ENCODE measurements at regions of chr4 and their contacts with region 1.

Region 1: GRCh38 chr4:139453371-139454110 is 380 bp upstream of the RAB33B start:
- DNase-seq: peak; percentile 92 to 98 (median 96)
- ATAC-seq: peak; percentile 86
- H3K4me3 ChIP-seq: peak overlapping the region; percentile 90 to 91
- H3K4me3 Mint-ChIP-seq: peak overlapping the region; percentile 98
- H3K27ac ChIP-seq: peak overlapping the region; percentile 92 to 96
- H3K27ac Mint-ChIP-seq: peak overlapping the region; percentile 99
- H3K4me1 ChIP-seq: peaks cover 41% of the 10 kb centered on the region
- H3K4me1 Mint-ChIP-seq: peaks cover 65% of the 10 kb centered on the region
- H3K27me3 ChIP-seq: no peaks in the 10 kb centered on the region
- H3K27me3 Mint-ChIP-seq: no peaks in the 10 kb centered on the region
- CTCF ChIP-seq: no peak

Region 2: GRCh38 chr4:139015269-139015947 is 438.1 kb before region 1 on chr4 and contains the start of gene NOCT:
- CTCF ChIA-PET with region 1: no interaction called
- POLR2A ChIA-PET with region 1: interaction called, 7 read pairs
- intact Hi-C with region 1: loop called (anchors 2 to 5 kb)
- DNase-seq: peak; percentile 76 to 98 (median 90)
- ATAC-seq: peak; percentile 86
- H3K4me3 ChIP-seq: peak within 1 kb of the TSS; percentile 52 to 67
- H3K4me3 Mint-ChIP-seq: peak within 1 kb of the TSS; percentile 91
- H3K27ac ChIP-seq: peak within 1 kb of the TSS; percentile 75 to 92
- H3K27ac Mint-ChIP-seq: peak within 1 kb of the TSS; percentile 99
- H3K4me1 ChIP-seq: peaks cover 7% of the 10 kb centered on the region
- H3K4me1 Mint-ChIP-seq: peaks cover 30% of the 10 kb centered on the region
- H3K27me3 ChIP-seq: no peaks in the 10 kb centered on the region
- H3K27me3 Mint-ChIP-seq: no peaks in the 10 kb centered on the region
- CTCF ChIP-seq: no peak
- total RNA-seq, gene NOCT: 45.7 to 49.6 TPM

Region 3: GRCh38 chr4:139177868-139178611 is 275.5 kb before region 1 on chr4:
- CTCF ChIA-PET with region 1: no interaction called
- POLR2A ChIA-PET with region 1: no interaction called
- intact Hi-C with region 1: loop called (anchors 1 to 2 kb)
- DNase-seq: peak; percentile 73 to 94 (median 88)
- ATAC-seq: peak; percentile 73
- H3K4me3 ChIP-seq: peak overlapping the region; percentile 73 to 99
- H3K4me3 Mint-ChIP-seq: peak overlapping the region; percentile 89
- H3K27ac ChIP-seq: peak overlapping the region; percentile 54 to 67
- H3K27ac Mint-ChIP-seq: peak overlapping the region; percentile 85
- H3K4me1 ChIP-seq: peaks cover 5% of the 10 kb centered on the region
- H3K4me1 Mint-ChIP-seq: peaks cover 19% of the 10 kb centered on the region
- H3K27me3 ChIP-seq: no peaks in the 10 kb centered on the region
- H3K27me3 Mint-ChIP-seq: no peaks in the 10 kb centered on the region
- CTCF ChIP-seq: no peak

Region 4: GRCh38 chr4:139301113-139301820 is 152.3 kb before region 1 on chr4 and contains the start of gene NAA15:
- CTCF ChIA-PET with region 1: interaction called, 3 read pairs
- POLR2A ChIA-PET with region 1: interaction called, 15 read pairs
- intact Hi-C with region 1: loop called (anchors 1 to 2 kb)
- DNase-seq: peak; percentile 94 to 99 (median 97)
- ATAC-seq: peak; percentile 89
- H3K4me3 ChIP-seq: peak within 1 kb of the TSS; percentile 90 to 94
- H3K4me3 Mint-ChIP-seq: peak within 1 kb of the TSS; percentile 99
- H3K27ac ChIP-seq: peak within 1 kb of the TSS; percentile 75 to 96
- H3K27ac Mint-ChIP-seq: peak within 1 kb of the TSS; percentile 98
- H3K4me1 ChIP-seq: peaks cover 28% of the 10 kb centered on the region
- H3K4me1 Mint-ChIP-seq: peaks cover 60% of the 10 kb centered on the region
- H3K27me3 ChIP-seq: no peaks in the 10 kb centered on the region
- H3K27me3 Mint-ChIP-seq: no peaks in the 10 kb centered on the region
- CTCF ChIP-seq: no peak
- total RNA-seq, gene NAA15: 55.8 to 59.0 TPM

Region 5: GRCh38 chr4:139501927-139502899 is 48.7 kb after region 1 on chr4:
- CTCF ChIA-PET with region 1: no interaction called
- POLR2A ChIA-PET with region 1: no interaction called
- intact Hi-C with region 1: loop called in 1 of 2 experiments (anchors 5 kb)
- DNase-seq: no peak
- ATAC-seq: no peak
- H3K4me3 ChIP-seq: no peak overlapping the region
- H3K4me3 Mint-ChIP-seq: no peak overlapping the region
- H3K27ac ChIP-seq: no peak overlapping the region
- H3K27ac Mint-ChIP-seq: no peak overlapping the region
- H3K4me1 ChIP-seq: no peaks in the 10 kb centered on the region
- H3K4me1 Mint-ChIP-seq: no peaks in the 10 kb centered on the region
- H3K27me3 ChIP-seq: no peaks in the 10 kb centered on the region
- H3K27me3 Mint-ChIP-seq: peaks cover 6% of the 10 kb centered on the region
- CTCF ChIP-seq: no peak

Region 6: GRCh38 chr4:139554893-139555704 is 101.6 kb after region 1 on chr4:
- CTCF ChIA-PET with region 1: no interaction called
- POLR2A ChIA-PET with region 1: interaction called, 25 read pairs
- intact Hi-C with region 1: loop called (anchors 1 to 2 kb)
- DNase-seq: peak; percentile 43 to 89 (median 74)
- ATAC-seq: peak; percentile 75
- H3K4me3 ChIP-seq: peak overlapping the region; percentile 79 to 84
- H3K4me3 Mint-ChIP-seq: peak overlapping the region; percentile 94
- H3K27ac ChIP-seq: peak overlapping the region in 1 of 2 experiments; percentile 53
- H3K27ac Mint-ChIP-seq: peak overlapping the region; percentile 95
- H3K4me1 ChIP-seq: peaks cover 9% of the 10 kb centered on the region
- H3K4me1 Mint-ChIP-seq: peaks cover 31% of the 10 kb centered on the region
- H3K27me3 ChIP-seq: peaks cover 0 to 9% of the 10 kb centered on the region in 2 experiments
- H3K27me3 Mint-ChIP-seq: peaks cover 9% of the 10 kb centered on the region
- CTCF ChIP-seq: no peak

Region 7: GRCh38 chr4:140523857-140524742 is 1070.6 kb after region 1 on chr4 and contains the start of gene ELMOD2:
- CTCF ChIA-PET with region 1: no interaction called
- POLR2A ChIA-PET with region 1: no interaction called
- intact Hi-C with region 1: loop called (anchors 2 kb)
- DNase-seq: peak; percentile 93 to 99 (median 97)
- ATAC-seq: peak; percentile 98
- H3K4me3 ChIP-seq: peak within 1 kb of the TSS; percentile 72 to 77
- H3K4me3 Mint-ChIP-seq: peak within 1 kb of the TSS; percentile 89
- H3K27ac ChIP-seq: peak within 1 kb of the TSS; percentile 59 to 63
- H3K27ac Mint-ChIP-seq: peak within 1 kb of the TSS; percentile 86
- H3K4me1 ChIP-seq: peaks cover 9% of the 10 kb centered on the region
- H3K4me1 Mint-ChIP-seq: peaks cover 27% of the 10 kb centered on the region
- H3K27me3 ChIP-seq: no peaks in the 10 kb centered on the region
- H3K27me3 Mint-ChIP-seq: no peaks in the 10 kb centered on the region
- CTCF ChIP-seq: peak; percentile 88
- total RNA-seq, gene ELMOD2: 7.2 to 8.8 TPM